ENCODE measurements at regions of chr3 and their contacts with region 1.

Region 1: DNA sequence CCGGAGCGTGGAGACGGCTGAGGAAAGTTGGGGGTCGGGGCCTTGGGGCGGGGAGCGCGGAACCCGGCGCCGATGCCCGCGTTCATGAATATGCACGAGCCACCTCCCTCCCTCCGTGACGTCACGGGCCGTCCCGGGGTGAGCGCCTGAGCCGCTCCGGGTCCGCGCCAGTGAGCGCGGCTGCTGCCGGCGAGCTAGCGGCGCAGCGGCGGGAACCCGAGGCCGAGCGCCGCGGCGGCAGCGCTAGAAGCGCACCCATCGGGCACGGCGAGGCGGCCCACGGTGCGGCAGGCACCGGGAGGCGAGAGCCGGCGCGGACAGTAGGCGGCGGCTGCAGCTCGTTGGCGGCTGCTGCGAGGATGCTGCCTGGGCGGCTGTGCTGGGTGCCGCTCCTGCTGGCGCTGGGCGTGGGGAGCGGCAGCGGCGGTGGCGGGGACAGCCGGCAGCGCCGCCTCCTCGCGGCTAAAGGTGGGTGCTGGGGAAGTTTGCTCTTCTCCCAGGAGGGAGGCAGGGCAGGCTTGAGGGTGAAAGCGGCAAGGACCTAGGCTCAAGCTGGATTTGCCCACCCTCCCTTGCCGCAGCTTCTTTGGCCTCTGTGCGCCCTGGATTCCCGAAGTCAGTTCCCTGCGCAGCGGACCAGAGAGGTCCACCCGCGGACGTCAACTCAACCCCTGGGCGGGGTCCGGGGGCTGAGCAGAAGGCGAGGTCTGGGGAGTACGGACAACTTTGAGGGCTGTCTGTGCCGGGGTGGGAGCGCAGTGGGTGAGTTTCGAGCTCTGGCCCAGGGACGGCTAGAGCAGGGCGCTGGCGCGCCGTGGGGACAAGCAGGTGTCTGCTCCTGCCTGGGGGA is at the start of gene CLSTN2:
- DNase-seq: peak; percentile 30 to 86 (median 80)
- H3K4me3 ChIP-seq: peak within 1 kb of the TSS; percentile 53 to 86 (median 71)
- H3K27ac ChIP-seq: peak within 1 kb of the TSS in 53 of 59 donors; percentile 12 to 85 (median 71)
- H3K27me3 ChIP-seq: peaks cover 0 to 9% (median 0%) of the 10 kb centered on the region in 45 donors
- CTCF ChIP-seq: peak in 15 of 56 donors; percentile 1 to 40 (median 22)
- total RNA-seq, gene CLSTN2: 27.9 to 162 (median 90.9) TPM

Region 2: DNA sequence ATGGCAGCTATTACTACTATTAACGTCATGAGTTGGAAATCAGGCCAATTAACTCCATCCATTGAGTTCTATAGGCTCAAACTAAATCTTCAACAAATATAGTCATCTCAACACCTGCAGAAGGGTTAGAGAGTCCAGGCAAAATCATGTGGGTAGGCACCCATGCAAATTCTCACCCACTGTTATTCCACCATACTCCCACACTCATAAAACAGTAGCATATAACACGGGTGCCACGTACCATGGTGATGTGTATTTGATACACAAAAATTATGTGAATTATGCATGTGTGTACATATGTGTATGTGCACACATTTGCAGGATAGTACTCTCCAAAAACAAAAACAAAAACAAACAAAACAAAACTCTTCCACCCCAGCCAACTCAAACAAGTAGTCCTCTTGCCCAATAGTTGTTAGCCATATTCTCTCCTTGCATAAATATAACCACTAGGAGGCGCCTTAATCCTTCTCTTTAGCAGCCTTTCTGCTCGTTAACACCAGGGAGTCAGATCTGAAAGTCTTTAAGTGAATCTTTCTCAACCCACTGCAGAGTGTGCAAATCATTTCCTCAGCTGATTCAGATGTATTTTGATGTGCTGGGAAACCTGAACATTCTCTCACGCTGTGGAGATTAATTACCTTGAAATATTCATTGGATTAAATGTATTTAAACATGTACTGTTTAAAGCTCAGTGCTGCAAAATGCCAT is 507.8 kb before region 1 on chr3:
- intact Hi-C with region 1: loop called (anchors 2 to 5 kb)
- DNase-seq: no peak
- H3K4me3 ChIP-seq: no peak overlapping the region
- H3K27ac ChIP-seq: no peak overlapping the region
- H3K27me3 ChIP-seq: no peaks in the 10 kb centered on the region
- CTCF ChIP-seq: peak; percentile 59 to 96 (median 89)

Region 3: GRCh38 chr3:139561959-139562676 is 373.1 kb before region 1 on chr3:
- intact Hi-C with region 1: loop called in 1 of 2 experiments (anchors 5 kb)
- DNase-seq: peak in 1 of 10 donors; percentile 33
- H3K4me3 ChIP-seq: no peak overlapping the region
- H3K27ac ChIP-seq: peak overlapping the region in 36 of 59 donors; percentile 5 to 75 (median 45)
- H3K27me3 ChIP-seq: no peaks in the 10 kb centered on the region
- CTCF ChIP-seq: peak; percentile 24 to 80 (median 65)

Region 4: GRCh38 chr3:139994891-139995290 is 59.6 kb after region 1 on chr3:
- intact Hi-C with region 1: no loop called
- DNase-seq: no peak
- H3K4me3 ChIP-seq: no peak overlapping the region
- H3K27ac ChIP-seq: no peak overlapping the region
- H3K27me3 ChIP-seq: no peaks in the 10 kb centered on the region
- CTCF ChIP-seq: no peak

Region 5: DNA sequence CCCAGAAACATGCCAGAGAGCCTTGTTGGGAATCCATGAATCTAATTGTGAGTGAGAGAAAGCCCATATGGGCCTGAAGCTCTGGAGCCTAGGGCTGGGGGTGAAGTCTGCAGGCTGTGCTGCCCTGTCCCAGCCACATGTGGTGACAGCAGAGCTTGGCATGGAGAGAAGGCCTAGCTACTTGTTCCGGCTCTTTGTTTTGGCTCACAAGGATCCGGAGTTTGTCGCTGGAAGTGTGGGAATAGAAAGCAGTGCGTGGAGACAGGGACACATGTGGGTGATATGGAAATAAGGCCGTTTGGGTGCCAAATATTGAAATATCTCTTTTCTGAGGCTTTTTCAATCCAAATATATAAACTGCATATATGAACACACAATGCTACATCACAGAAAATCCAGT is 78.0 kb after region 1 on chr3:
- intact Hi-C with region 1: loop called in 1 of 2 experiments (anchors 10 kb)
- DNase-seq: peak in 6 of 10 donors; percentile 35 to 69 (median 55)
- H3K4me3 ChIP-seq: no peak overlapping the region
- H3K27ac ChIP-seq: peak overlapping the region in 5 of 59 donors; percentile 13 to 40 (median 32)
- H3K27me3 ChIP-seq: no peaks in the 10 kb centered on the region
- CTCF ChIP-seq: peak in 1 of 56 donors; percentile 8

Region 6: GRCh38 chr3:140128631-140129030 is 193.4 kb after region 1 on chr3:
- intact Hi-C with region 1: no loop called
- DNase-seq: peak in 3 of 10 donors; percentile 9 to 49 (median 35)
- H3K4me3 ChIP-seq: no peak overlapping the region
- H3K27ac ChIP-seq: no peak overlapping the region
- H3K27me3 ChIP-seq: no peaks in the 10 kb centered on the region
- CTCF ChIP-seq: peak in 50 of 56 donors; percentile 16 to 70 (median 45)

Region 7: DNA sequence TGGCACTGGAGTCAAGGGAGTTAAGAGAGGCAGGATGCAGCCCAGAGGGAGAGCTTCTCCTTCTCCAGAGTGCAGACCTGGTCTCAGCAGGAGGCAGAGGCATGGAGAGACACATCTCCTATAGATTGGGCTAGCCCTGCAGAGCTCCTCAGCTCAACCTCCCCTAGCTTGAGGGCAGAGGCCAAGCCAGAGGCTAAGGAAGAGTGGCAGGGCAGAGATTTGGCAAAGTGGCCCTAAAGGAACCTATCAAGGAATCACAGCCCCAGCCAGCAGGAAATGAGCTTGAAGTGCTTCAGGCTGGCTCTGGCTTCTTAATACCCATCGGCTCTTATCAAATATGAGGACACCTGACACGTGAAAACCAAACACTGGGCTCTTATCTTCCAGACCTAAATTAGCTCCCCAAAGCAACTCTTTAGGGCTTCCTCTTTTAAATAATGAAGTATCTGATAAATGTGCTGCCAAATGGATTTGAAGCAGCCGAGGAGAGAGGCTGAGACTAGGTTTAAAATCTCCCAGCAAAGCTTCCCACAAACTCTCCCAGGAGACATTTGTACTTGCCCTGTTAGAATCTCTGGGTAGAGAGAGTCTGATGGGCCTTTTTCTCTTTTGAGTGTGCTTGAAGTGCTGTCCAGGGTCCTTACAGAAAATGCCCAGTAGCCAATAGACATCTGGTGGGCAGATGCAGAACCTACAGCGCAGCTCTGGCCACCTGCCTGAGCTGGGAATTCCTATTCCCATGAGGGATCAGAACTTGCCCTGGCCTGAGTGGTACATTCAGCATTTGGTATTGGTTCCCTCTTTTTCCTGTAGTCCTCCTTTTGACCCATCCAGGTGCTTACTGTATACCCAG is 271.2 kb after region 1 on chr3:
- intact Hi-C with region 1: loop called in 1 of 2 experiments (anchors 10 kb)
- DNase-seq: no peak
- H3K4me3 ChIP-seq: no peak overlapping the region
- H3K27ac ChIP-seq: no peak overlapping the region
- H3K27me3 ChIP-seq: peaks cover 0 to 3% (median 0%) of the 10 kb centered on the region in 45 donors
- CTCF ChIP-seq: peak in 14 of 56 donors; percentile 6 to 39 (median 18)

Measured in dorsolateral prefrontal cortex (tissue), 120 donors.